Right lobe of liver (tissue), 6 donors: ENCODE measurements at regions of chr1 and their contacts with region 1.

Region 1: GRCh38 chr1:94819941-94820746 is at the start of gene SLC44A3:
- DNase-seq: peak; percentile 66 to 74 (median 72)
- ATAC-seq: peak; percentile 88 to 97 (median 94)
- H3K4me3 ChIP-seq: peak within 1 kb of the TSS; percentile 64 to 78 (median 64)
- H3K27ac ChIP-seq: peak within 1 kb of the TSS; percentile 28 to 66 (median 46)
- H3K4me1 ChIP-seq: peaks cover 0 to 9% (median 0%) of the 10 kb centered on the region in 4 donors
- H3K27me3 ChIP-seq: no peaks in the 10 kb centered on the region
- CTCF ChIP-seq: peak; percentile 2 to 59 (median 33)
- POLR2A ChIP-seq: no peak
- total RNA-seq, gene SLC44A3: 1.9 to 8.7 (median 7.4) TPM

Region 2: GRCh38 chr1:94522304-94522703 is 297.8 kb before region 1 on chr1:
- intact Hi-C with region 1: loop called in 1 of 2 experiments (anchors 10 kb)
- DNase-seq: no peak
- ATAC-seq: peak; percentile 42 to 57 (median 50)
- H3K4me3 ChIP-seq: no peak overlapping the region
- H3K27ac ChIP-seq: no peak overlapping the region
- H3K4me1 ChIP-seq: no peaks in the 10 kb centered on the region
- H3K27me3 ChIP-seq: no peaks in the 10 kb centered on the region
- CTCF ChIP-seq: peak; percentile 15 to 36 (median 28)
- POLR2A ChIP-seq: no peak

Region 3: DNA sequence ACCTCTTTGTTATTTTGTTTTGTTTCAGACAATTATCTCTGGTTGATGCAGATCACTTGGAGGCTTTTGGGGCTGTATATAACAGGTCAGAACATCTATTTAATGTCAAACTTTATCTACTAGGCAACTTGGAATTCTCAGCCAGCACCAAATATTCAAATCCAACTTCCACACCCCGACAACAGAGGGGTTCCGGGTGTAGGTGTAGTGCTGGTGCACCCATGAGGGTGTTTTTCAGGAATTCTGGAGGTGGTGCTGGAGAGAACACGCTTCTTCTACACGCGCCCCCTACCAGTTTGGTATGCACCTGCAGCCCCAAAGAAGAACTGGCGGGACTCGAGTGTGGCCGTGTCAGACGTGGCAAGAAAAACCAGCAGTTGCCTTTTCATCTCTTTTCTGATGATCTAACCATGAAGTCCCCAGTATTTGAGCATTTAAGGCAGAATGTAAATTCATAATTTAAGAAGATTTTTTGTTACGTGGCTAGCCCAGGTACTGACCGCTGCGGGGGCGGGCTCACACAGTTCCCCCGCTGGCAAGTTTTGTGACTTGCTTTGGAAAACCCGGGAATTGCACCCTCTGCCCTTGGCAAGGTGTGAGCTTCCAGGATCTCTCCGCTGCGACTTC is 296.5 kb after region 1 on chr1:
- intact Hi-C with region 1: no loop called
- DNase-seq: peak; percentile 65 to 84 (median 81)
- ATAC-seq: peak; percentile 74 to 84 (median 75)
- H3K4me3 ChIP-seq: peak overlapping the region; percentile 70 to 77 (median 70)
- H3K27ac ChIP-seq: peak overlapping the region; percentile 80 to 93 (median 88)
- H3K4me1 ChIP-seq: peaks cover 0 to 27% (median 10%) of the 10 kb centered on the region in 4 donors
- H3K27me3 ChIP-seq: no peaks in the 10 kb centered on the region
- CTCF ChIP-seq: peak; percentile 59 to 69 (median 61)
- POLR2A ChIP-seq: no peak